ENCODE measurements at regions of chr1 and their contacts with region 1.

Region 1: DNA sequence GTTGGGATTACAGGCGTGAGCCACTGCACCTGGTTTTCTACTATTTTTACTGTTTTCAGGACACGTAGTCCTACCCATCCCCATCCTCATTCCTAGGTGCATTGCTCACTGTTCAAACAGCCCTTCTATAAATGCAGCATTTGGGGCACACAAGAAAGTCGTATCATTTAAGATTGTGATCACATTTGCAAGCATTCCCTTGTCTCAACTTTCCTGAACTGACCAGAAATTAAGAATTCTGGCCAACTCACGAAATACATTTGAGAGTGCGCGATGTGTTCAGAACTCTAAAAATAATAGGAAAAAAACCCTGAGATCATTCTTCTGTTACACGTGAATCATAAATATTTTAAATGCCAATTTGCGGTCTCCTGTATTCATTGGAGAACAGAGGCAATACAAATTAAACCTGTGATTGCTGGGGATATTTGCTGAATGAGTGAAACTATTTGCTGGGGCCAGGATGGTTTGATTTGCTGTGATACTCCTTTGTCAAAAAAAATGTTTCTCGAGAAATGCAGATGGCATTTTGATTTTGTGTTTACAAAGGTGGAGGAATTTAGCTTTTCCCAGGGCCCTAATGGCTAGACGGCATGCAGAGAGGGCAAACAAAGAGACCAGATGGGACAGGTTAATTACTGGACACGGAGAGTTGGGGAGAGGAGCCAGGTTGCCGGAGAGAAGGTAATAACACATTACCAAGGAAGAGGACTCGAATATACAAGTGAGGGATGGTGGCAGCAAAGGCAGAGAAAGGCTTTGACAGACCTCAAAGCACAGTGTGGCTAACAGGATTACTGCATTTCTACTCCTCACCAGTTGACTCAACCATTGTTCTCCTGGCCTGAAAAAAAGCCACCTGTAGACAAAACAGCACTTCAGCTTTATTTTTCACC is 38.4 kb downstream of the STPG1 start:
- DNase-seq: peak; percentile 43
- H3K4me3 Mint-ChIP-seq: peak overlapping the region; percentile 56
- H3K27ac Mint-ChIP-seq: peak overlapping the region; percentile 99
- H3K4me1 Mint-ChIP-seq: peaks cover 35% of the 10 kb centered on the region
- H3K27me3 Mint-ChIP-seq: no peaks in the 10 kb centered on the region
- CTCF ChIP-seq: no peak

Region 2: GRCh38 chr1:23936481-23937176 is 438.5 kb before region 1 on chr1:
- CTCF ChIA-PET with region 1: no interaction called
- POLR2A ChIA-PET with region 1: no interaction called
- intact Hi-C with region 1: no loop called
- DNase-seq: no peak
- H3K4me3 Mint-ChIP-seq: no peak overlapping the region
- H3K27ac Mint-ChIP-seq: no peak overlapping the region
- H3K4me1 Mint-ChIP-seq: no peaks in the 10 kb centered on the region
- H3K27me3 Mint-ChIP-seq: no peaks in the 10 kb centered on the region
- CTCF ChIP-seq: no peak

Region 3: DNA sequence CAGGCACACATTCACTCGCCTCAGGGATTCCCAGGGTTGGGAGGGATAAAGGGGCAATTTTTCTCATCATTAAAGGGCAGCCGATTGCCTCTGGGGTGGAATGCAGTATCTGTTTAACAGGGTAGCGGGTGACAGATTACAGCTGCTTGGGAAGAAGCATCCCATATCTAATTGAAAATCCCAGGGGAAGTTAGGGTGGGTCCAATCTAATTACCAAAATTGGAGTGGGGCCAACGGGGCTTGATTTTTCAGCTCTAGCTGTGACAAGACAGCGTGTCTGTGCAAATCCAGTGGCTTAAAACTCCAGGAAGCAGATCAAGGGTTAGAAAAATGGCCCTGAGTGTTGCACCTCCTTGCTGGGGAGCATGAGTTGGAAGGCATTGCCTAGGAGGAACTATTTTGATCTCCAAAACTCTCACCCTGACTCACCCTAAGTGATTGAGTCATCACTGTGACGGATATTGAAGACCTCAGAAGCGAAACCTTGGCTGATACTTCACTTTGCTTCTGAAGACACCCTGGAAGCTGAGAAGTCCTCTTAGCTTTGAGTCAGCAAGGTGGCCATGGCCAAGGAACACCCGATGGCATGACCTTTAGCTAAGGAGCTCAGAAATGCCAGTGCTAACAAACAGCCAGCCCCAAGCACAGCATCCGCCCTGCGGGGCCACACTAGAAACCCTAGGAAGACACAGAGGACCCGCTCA is 10.0 kb before region 1 on chr1:
- CTCF ChIA-PET with region 1: interaction called, 12 read pairs
- POLR2A ChIA-PET with region 1: interaction called, 78 read pairs
- intact Hi-C with region 1: no loop called
- DNase-seq: peak; percentile 98
- H3K4me3 Mint-ChIP-seq: peak overlapping the region; percentile 28
- H3K27ac Mint-ChIP-seq: peak overlapping the region; percentile 89
- H3K4me1 Mint-ChIP-seq: peaks cover 33% of the 10 kb centered on the region
- H3K27me3 Mint-ChIP-seq: no peaks in the 10 kb centered on the region
- CTCF ChIP-seq: no peak

Measured in MCF 10A (cell line).